B cell (primary cell): ENCODE measurements at regions of chr9 and their contacts with region 1.

Region 1: DNA sequence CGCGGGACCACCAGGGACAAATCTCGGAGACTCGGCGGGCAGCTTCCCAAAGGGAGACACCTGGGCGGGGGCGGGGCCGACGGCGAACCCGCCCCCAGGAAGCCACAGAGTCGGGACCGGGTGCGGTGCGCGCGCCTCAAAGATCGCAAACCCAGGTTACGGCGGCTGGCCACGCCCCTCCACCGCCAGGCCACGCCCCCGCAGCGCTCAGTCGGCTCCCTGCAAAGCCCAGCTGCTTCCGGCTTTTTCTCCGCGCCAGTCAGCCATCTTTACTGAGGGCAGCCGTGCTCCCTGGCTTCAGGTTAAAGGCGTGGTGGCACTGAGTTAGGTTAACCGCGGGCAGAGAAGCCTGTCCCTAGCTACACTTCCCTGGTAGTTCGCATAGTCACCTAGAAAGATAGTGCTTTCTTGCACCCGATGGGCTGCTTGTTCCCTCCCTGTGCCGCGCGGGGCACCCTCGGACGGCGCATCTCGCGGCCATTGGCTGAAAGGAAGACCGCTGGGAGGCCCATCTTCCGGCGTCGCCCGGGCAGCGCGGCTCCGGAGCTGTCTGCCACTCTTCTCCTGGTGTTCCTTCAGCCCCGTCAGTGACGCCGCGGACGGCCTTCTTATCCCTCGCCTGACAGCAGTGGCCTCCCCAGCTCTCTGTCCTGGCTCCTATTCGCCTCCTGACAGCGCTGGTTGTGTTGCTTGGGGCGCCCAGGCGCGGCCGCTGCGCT is at the start of gene TBC1D2:
- DNase-seq: peak; percentile 98
- ATAC-seq: peak; percentile 89
- H3K4me3 ChIP-seq: peak within 1 kb of the TSS; percentile 89 to 98 (median 93)
- H3K4me3 Mint-ChIP-seq: peak within 1 kb of the TSS; percentile 98
- H3K27ac ChIP-seq: peak within 1 kb of the TSS; percentile 83 to 92
- H3K27ac Mint-ChIP-seq: peak within 1 kb of the TSS; percentile 100
- H3K4me1 ChIP-seq: peaks cover 11 to 21% of the 10 kb centered on the region in 2 donors
- H3K4me1 Mint-ChIP-seq: peaks cover 15% of the 10 kb centered on the region
- H3K27me3 ChIP-seq: no peaks in the 10 kb centered on the region
- H3K27me3 Mint-ChIP-seq: no peaks in the 10 kb centered on the region
- CTCF ChIP-seq: peak; percentile 14
- total RNA-seq, gene TBC1D2: 4.3 and 5.0 TPM in 2 replicates

Region 2: GRCh38 chr9:97411789-97412625 is 843.7 kb before region 1 on chr9 and contains the start of gene TDRD7:
- CTCF ChIA-PET with region 1: no interaction called
- POLR2A ChIA-PET with region 1: no interaction called
- intact Hi-C with region 1: loop called (anchors 5 kb)
- DNase-seq: peak; percentile 96
- ATAC-seq: peak; percentile 91
- H3K4me3 ChIP-seq: peak within 1 kb of the TSS; percentile 57 to 92 (median 85)
- H3K4me3 Mint-ChIP-seq: peak within 1 kb of the TSS; percentile 77
- H3K27ac ChIP-seq: peak within 1 kb of the TSS; percentile 61 to 79
- H3K27ac Mint-ChIP-seq: peak within 1 kb of the TSS; percentile 82
- H3K4me1 ChIP-seq: peaks cover 18% of the 10 kb centered on the region in 2 donors
- H3K4me1 Mint-ChIP-seq: peaks cover 34% of the 10 kb centered on the region
- H3K27me3 ChIP-seq: peaks cover 0 to 3% (median 0%) of the 10 kb centered on the region in 4 experiments
- H3K27me3 Mint-ChIP-seq: peaks cover 10% of the 10 kb centered on the region
- CTCF ChIP-seq: peak; percentile 100
- total RNA-seq, gene TDRD7: 19.7 and 20.6 TPM in 2 replicates

Region 3: GRCh38 chr9:97982683-97983588 is 272.8 kb before region 1 on chr9 and contains the start of gene ANP32B:
- CTCF ChIA-PET with region 1: interaction called, 4 read pairs
- POLR2A ChIA-PET with region 1: interaction called, 14 read pairs
- intact Hi-C with region 1: loop called (anchors 1 kb)
- DNase-seq: peak; percentile 96
- ATAC-seq: peak; percentile 79
- H3K4me3 ChIP-seq: peak within 1 kb of the TSS; percentile 25 to 97 (median 84)
- H3K4me3 Mint-ChIP-seq: peak within 1 kb of the TSS; percentile 92
- H3K27ac ChIP-seq: peak within 1 kb of the TSS; percentile 90 to 93
- H3K27ac Mint-ChIP-seq: peak within 1 kb of the TSS; percentile 98
- H3K4me1 ChIP-seq: peaks cover 28 to 34% of the 10 kb centered on the region in 2 donors
- H3K4me1 Mint-ChIP-seq: peaks cover 29% of the 10 kb centered on the region
- H3K27me3 ChIP-seq: no peaks in the 10 kb centered on the region
- H3K27me3 Mint-ChIP-seq: no peaks in the 10 kb centered on the region
- CTCF ChIP-seq: peak; percentile 96
- total RNA-seq, gene ANP32B: 138 and 150 TPM in 2 replicates

Region 4: GRCh38 chr9:98074115-98074990 is 181.4 kb before region 1 on chr9:
- CTCF ChIA-PET with region 1: interaction called, 46 read pairs
- POLR2A ChIA-PET with region 1: no interaction called
- intact Hi-C with region 1: no loop called
- DNase-seq: peak; percentile 74
- ATAC-seq: peak; percentile 57
- H3K4me3 ChIP-seq: no peak overlapping the region
- H3K4me3 Mint-ChIP-seq: no peak overlapping the region
- H3K27ac ChIP-seq: no peak overlapping the region
- H3K27ac Mint-ChIP-seq: peak overlapping the region; percentile 56
- H3K4me1 ChIP-seq: peaks cover 3 to 13% of the 10 kb centered on the region in 2 donors
- H3K4me1 Mint-ChIP-seq: peaks cover 11% of the 10 kb centered on the region
- H3K27me3 ChIP-seq: no peaks in the 10 kb centered on the region
- H3K27me3 Mint-ChIP-seq: no peaks in the 10 kb centered on the region
- CTCF ChIP-seq: peak; percentile 98

Region 5: DNA sequence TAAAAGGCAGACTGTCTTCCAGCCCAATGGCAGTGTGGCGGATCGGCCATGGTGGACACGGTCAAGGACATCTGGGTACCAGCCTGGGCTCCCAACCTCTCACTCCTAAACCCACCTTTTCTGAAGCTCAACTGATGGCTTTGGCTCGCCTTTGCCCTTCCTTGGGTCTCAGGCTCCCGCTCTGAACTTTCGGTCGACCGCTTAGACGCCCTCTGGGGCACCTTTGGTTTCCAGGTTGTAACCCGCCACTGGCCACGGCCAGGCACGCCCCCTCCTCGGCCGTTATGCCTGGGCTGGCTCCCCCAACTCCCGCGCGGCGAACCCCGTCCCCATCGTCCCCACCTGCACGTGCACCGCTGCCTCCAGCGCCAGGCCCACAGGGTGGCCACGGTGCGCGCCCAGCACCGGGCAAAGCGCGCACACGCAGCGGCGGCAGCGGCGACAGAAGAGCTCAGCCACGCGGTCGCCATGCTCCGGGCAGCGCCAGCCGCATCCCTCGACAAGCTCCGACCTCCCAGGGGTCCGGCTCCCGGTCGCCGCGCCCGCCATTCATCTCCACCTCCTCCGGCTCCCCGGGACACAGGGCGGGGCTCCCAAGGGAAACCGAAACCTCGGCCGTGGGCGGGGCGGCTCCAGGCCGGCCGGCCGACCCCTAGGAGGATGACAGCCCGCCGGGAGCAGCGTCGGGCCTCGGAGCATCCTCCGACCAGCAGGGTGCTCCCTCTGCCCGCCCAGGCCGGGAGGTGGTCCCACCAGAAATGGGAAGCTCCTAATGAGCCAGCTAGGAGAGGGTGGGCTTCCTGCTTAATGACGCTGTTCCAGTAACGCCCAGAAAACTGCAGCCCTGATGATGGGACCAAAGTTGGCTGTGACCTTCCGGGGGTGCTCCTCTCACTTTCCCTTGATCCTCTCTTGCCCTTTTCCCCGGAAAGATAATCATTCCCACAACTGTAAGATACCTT is 136.8 kb before region 1 on chr9 and contains the start of gene TRIM14:
- CTCF ChIA-PET with region 1: interaction called, 16 read pairs
- POLR2A ChIA-PET with region 1: interaction called, 4 read pairs
- intact Hi-C with region 1: loop called (anchors 5 kb)
- DNase-seq: peak; percentile 70
- ATAC-seq: peak; percentile 71
- H3K4me3 ChIP-seq: peak within 1 kb of the TSS; percentile 80 to 91 (median 89)
- H3K4me3 Mint-ChIP-seq: peak within 1 kb of the TSS; percentile 88
- H3K27ac ChIP-seq: peak within 1 kb of the TSS; percentile 69 to 78
- H3K27ac Mint-ChIP-seq: peak within 1 kb of the TSS; percentile 95
- H3K4me1 ChIP-seq: peaks cover 28 to 33% of the 10 kb centered on the region in 2 donors
- H3K4me1 Mint-ChIP-seq: peaks cover 45% of the 10 kb centered on the region
- H3K27me3 ChIP-seq: no peaks in the 10 kb centered on the region
- H3K27me3 Mint-ChIP-seq: no peaks in the 10 kb centered on the region
- CTCF ChIP-seq: no peak
- total RNA-seq, gene TRIM14: 22.4 and 22.5 TPM in 2 replicates

Region 6: GRCh38 chr9:98796364-98797101 is 540.8 kb after region 1 on chr9 and contains the start of gene ANKS6:
- CTCF ChIA-PET with region 1: interaction called, 4 read pairs
- POLR2A ChIA-PET with region 1: no interaction called
- intact Hi-C with region 1: loop called (anchors 2 kb)
- DNase-seq: peak; percentile 88
- ATAC-seq: peak; percentile 93
- H3K4me3 ChIP-seq: peak within 1 kb of the TSS; percentile 35 to 93 (median 78)
- H3K4me3 Mint-ChIP-seq: peak within 1 kb of the TSS; percentile 88
- H3K27ac ChIP-seq: peak within 1 kb of the TSS; percentile 38 to 68
- H3K27ac Mint-ChIP-seq: peak within 1 kb of the TSS; percentile 68
- H3K4me1 ChIP-seq: peaks cover 10 to 13% of the 10 kb centered on the region in 2 donors
- H3K4me1 Mint-ChIP-seq: peaks cover 23% of the 10 kb centered on the region
- H3K27me3 ChIP-seq: no peaks in the 10 kb centered on the region
- H3K27me3 Mint-ChIP-seq: no peaks in the 10 kb centered on the region
- CTCF ChIP-seq: peak; percentile 45
- total RNA-seq, gene ANKS6: 15.1 and 16.1 TPM in 2 replicates

Region 7: GRCh38 chr9:98860871-98861293 is 605.1 kb after region 1 on chr9:
- CTCF ChIA-PET with region 1: no interaction called
- POLR2A ChIA-PET with region 1: no interaction called
- intact Hi-C with region 1: no loop called
- DNase-seq: no peak
- ATAC-seq: no peak
- H3K4me3 ChIP-seq: no peak overlapping the region
- H3K4me3 Mint-ChIP-seq: no peak overlapping the region
- H3K27ac ChIP-seq: no peak overlapping the region
- H3K27ac Mint-ChIP-seq: no peak overlapping the region
- H3K4me1 ChIP-seq: no peaks in the 10 kb centered on the region
- H3K4me1 Mint-ChIP-seq: no peaks in the 10 kb centered on the region
- H3K27me3 ChIP-seq: no peaks in the 10 kb centered on the region
- H3K27me3 Mint-ChIP-seq: peaks cover 32% of the 10 kb centered on the region
- CTCF ChIP-seq: no peak